Mammary epithelial cell (primary cell): ENCODE measurements at regions of chr9 and their contacts with region 1.

Region 1: GRCh38 chr9:114653556-114654159 is 3.9 kb downstream of the TEX53 start:
- DNase-seq: peak; percentile 60
- H3K4me3 ChIP-seq: no peak overlapping the region
- H3K27ac ChIP-seq: no peak overlapping the region
- H3K4me1 ChIP-seq: peaks cover 3% of the 10 kb centered on the region
- H3K27me3 ChIP-seq: no peaks in the 10 kb centered on the region
- CTCF ChIP-seq: peak; percentile 89 to 97

Region 2: DNA sequence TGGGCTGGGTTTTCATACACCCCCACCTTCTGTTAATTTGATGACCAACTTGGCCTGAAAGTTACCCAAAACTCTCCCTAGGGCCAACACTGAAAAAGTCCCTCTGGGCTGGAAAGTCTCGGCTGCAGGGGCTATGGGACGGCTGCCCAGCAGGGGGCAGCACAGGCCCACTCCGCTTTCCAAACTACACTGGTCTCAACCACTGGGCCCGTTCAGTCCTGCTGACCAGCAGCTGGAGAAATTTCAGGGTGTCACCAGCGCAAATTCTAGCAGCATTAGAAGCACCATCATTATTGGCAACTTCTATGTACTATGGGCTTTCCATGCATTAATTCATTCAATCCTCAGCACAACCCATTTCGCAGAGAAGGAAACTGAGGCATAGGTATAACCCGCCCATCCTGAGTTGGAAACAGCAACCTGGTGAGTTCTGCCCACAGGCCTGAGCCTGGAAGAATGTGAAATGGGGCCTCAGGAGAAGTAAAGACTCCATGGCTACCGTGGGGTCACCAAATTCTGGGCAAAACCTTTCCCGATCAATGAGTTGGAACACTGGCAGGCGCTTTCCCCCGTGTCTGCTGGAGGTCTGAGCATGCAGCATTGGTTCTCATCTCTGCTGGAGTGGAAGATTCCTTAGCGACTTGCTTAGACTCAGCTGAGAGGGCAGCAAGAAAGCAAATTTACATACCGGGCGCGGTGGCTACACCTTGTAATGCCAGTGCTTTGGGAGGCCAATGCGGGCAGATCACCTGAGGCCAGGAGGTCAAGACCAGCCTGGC is 314.3 kb before region 1 on chr9:
- CTCF ChIA-PET with region 1: no interaction called
- dilution Hi-C with region 1: no loop called
- in situ Hi-C with region 1: no loop called
- intact Hi-C with region 1: loop called (anchors 1 kb)
- DNase-seq: peak; percentile 37
- H3K4me3 ChIP-seq: no peak overlapping the region
- H3K27ac ChIP-seq: no peak overlapping the region
- H3K4me1 ChIP-seq: peaks cover 11% of the 10 kb centered on the region
- H3K27me3 ChIP-seq: no peaks in the 10 kb centered on the region
- CTCF ChIP-seq: peak; percentile 85 to 87

Region 3: DNA sequence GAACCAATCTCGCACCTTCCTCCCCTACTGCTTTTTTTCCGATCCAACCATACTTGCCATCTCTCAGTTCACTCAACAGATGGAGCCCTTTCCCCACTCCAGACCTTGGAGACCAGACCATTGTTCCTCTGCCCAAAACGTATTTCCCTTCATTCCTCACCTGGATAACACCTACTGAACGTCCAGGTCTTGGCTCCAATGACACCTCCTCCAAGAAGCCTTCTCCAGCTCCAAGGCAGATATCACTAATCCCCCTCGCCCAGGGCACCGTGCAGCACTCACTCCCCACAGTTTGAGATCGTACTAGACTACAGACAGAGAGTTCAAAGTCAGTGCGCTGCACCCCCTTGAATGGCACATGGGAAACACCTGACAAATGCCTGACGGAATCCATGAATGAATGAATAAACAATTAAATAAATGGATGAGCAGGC is 218.8 kb before region 1 on chr9:
- CTCF ChIA-PET with region 1: interaction called, 4 read pairs
- dilution Hi-C with region 1: no loop called
- in situ Hi-C with region 1: loop called (anchors 5 to 10 kb)
- intact Hi-C with region 1: loop called (anchors 1 kb)
- DNase-seq: peak; percentile 41
- H3K4me3 ChIP-seq: no peak overlapping the region
- H3K27ac ChIP-seq: no peak overlapping the region
- H3K4me1 ChIP-seq: no peaks in the 10 kb centered on the region
- H3K27me3 ChIP-seq: no peaks in the 10 kb centered on the region
- CTCF ChIP-seq: peak; percentile 80 to 84

Region 4: GRCh38 chr9:114505187-114506081 is 148.2 kb before region 1 on chr9 and contains the start of gene WHRN:
- CTCF ChIA-PET with region 1: no interaction called
- dilution Hi-C with region 1: no loop called
- in situ Hi-C with region 1: no loop called
- intact Hi-C with region 1: loop called (anchors 1 kb)
- DNase-seq: peak; percentile 88
- H3K4me3 ChIP-seq: peak within 1 kb of the TSS; percentile 64 to 79 (median 67)
- H3K27ac ChIP-seq: peak within 1 kb of the TSS; percentile 81
- H3K4me1 ChIP-seq: peaks cover 32% of the 10 kb centered on the region
- H3K27me3 ChIP-seq: no peaks in the 10 kb centered on the region
- CTCF ChIP-seq: no peak
- total RNA-seq, gene WHRN: 3.2 to 9.7 TPM

Region 5: GRCh38 chr9:114606597-114607207 is 47.0 kb before region 1 on chr9:
- CTCF ChIA-PET with region 1: no interaction called
- dilution Hi-C with region 1: no loop called
- in situ Hi-C with region 1: no loop called
- intact Hi-C with region 1: loop called (anchors 2 kb)
- DNase-seq: peak; percentile 55
- H3K4me3 ChIP-seq: no peak overlapping the region
- H3K27ac ChIP-seq: no peak overlapping the region
- H3K4me1 ChIP-seq: peaks cover 20% of the 10 kb centered on the region
- H3K27me3 ChIP-seq: no peaks in the 10 kb centered on the region
- CTCF ChIP-seq: no peak